ENCODE measurements at regions of chr12 and their contacts with region 1.

Region 1: DNA sequence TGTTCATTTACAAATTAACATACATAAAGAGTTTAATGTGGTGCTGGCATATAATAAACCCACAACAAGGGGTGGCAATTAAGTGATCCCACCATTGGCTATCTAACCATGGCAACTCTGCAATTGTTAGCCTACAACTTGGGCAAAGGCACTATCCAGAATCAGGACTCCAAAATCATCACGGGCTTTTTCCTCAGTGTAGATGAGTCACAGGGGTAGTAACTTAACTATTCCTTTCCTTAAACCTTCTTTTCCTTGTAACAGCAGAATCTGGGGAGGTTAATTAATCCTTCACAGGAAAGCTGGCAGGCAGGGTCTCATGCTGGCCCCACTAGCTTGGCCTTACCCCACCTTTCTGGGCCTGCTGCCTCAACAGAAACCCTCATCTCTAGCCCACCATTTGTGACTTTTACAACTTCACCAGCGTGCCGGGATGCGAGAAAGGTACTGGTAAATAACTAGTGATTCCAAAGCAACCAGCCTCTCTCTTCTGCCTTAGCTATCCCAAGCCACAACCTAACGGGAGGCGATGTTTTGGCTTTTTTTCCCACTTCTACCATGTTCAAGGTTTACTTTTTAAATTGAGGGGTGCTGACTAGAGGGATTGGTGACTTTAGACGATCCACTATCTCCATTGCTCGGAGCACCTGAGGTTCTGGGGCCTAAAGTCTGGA is 769 bp downstream of the ATP5MC2 start:
- DNase-seq: no peak
- H3K4me3 ChIP-seq: peak overlapping the region; percentile 72
- CTCF ChIP-seq: no peak

Region 2: DNA sequence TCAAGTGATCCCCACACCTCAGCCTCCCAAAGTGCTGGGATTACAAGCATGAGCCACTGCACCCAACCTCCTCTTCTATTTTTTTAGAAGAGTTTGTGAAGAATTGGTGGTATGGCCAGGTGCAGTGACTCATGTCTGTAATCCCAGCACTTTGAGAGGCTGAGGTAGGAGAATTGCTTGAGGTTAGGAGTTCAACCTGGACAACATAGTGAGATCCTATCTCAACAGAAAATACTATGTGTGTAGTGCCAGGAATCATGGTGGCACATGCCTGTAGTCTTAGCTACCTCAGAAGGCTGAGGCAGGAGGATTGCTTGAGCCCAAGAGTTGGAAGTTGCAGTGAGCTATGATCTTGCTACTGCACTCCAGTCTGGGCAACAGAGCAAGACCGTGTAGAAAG is 43.4 kb before region 1 on chr12:
- in situ Hi-C with region 1: loop called (anchors 5 kb)
- DNase-seq: no peak
- H3K4me3 ChIP-seq: no peak overlapping the region
- CTCF ChIP-seq: no peak

Measured in astrocyte of the cerebellum (primary cell).